ENCODE measurements at regions of chr5 and their contacts with region 1.

Region 1: DNA sequence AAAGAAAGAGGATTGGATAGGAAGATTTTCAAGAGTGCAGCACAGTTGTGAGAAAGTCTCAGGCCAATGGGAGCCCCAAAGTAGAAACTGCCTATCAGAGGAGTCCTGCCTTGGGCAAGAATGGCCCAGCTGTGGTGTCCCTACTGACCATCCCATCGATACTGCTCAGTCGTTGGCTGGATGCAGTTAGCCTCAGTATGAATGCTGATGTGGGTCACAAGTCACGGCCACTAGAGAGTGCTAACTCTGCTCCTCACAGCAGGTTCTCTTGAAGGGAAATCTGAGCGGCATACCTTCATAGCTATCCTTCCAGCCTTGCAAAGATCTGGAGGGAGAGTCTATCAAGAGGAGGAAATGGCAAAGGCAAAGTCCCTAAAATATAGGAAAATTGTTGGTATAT is 11.6 kb upstream of the CETN3 start:
- DNase-seq: no peak
- H3K4me3 ChIP-seq: no peak overlapping the region
- H3K27ac ChIP-seq: no peak overlapping the region
- H3K4me1 ChIP-seq: no peaks in the 10 kb centered on the region; a peak in 1 of 7 replicates
- H3K27me3 ChIP-seq: no peaks in the 10 kb centered on the region
- CTCF ChIP-seq: peak; percentile 40 to 67 (median 41)
- EP300 ChIP-seq: no peak
- POLR2A ChIP-seq: no peak
- RAD21 ChIP-seq: peak; percentile 37 to 54

Region 2: GRCh38 chr5:90353254-90353653 is 67.9 kb before region 1 on chr5:
- CTCF ChIA-PET with region 1: no interaction called
- POLR2A ChIA-PET with region 1: no interaction called
- DNase-seq: no peak
- H3K4me3 ChIP-seq: no peak overlapping the region
- H3K27ac ChIP-seq: no peak overlapping the region
- H3K4me1 ChIP-seq: no peaks in the 10 kb centered on the region
- H3K27me3 ChIP-seq: no peaks in the 10 kb centered on the region
- CTCF ChIP-seq: no peak
- EP300 ChIP-seq: no peak
- POLR2A ChIP-seq: no peak
- RAD21 ChIP-seq: no peak

Region 3: DNA sequence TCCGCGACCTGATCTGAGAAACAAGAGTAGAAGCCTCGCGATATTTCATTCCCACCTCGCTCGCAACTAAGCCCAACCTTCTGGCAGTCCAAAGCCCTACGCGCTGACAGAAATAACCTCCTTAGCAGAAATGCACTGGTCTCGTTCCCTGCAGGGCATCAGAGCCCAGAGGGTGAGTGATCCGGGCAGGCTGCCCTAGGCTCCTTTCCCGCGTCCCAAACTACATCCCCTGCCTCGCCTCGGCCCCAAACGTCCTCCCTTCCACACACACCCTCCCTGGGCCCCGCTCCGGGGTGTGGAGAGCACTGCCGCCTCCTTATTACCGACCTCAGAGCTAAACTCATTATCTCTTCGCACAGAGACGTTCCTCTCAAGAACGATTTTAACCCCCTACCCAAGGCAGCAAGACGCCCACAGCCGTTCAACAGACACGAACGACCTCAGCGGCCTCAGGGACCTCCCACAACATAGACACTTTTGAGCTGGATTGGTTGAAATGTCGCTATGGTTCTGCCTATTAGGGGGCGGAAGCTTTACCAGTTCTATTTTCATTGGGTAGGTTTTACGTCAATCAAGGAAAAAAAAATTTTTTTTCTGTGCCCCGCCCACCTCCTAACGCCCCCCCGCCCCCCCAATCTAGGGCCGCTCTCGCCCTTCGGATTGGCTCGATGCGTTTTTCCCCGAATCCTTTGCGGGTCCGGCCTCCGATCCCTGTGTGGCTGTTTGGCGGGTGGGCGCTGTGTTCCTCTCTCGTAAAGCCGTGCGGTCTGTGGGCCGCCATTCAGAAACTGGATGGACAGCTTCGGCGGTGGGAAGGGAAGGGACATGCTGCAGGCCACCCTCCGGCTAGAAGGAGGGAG is 11.6 kb before region 1 on chr5 and contains the start of gene CETN3:
- CTCF ChIA-PET with region 1: interaction called, 6 read pairs
- POLR2A ChIA-PET with region 1: interaction called, 17 read pairs
- DNase-seq: peak; percentile 78 to 88
- H3K4me3 ChIP-seq: peak within 1 kb of the TSS; percentile 81 to 96 (median 93)
- H3K27ac ChIP-seq: peak within 1 kb of the TSS; percentile 91
- H3K4me1 ChIP-seq: peaks cover 0 to 4% (median 0%) of the 10 kb centered on the region in 4 experiments; a peak in 2 of 7 replicates
- H3K27me3 ChIP-seq: no peaks in the 10 kb centered on the region
- CTCF ChIP-seq: no peak
- EP300 ChIP-seq: no peak
- POLR2A ChIP-seq: peak; percentile 94 to 95
- RAD21 ChIP-seq: no peak
- total RNA-seq, gene CETN3: 38.4 and 43.8 TPM in 2 replicates

Region 4: GRCh38 chr5:90529194-90529938 is 108.2 kb after region 1 on chr5 and contains the start of gene LYSMD3:
- CTCF ChIA-PET with region 1: interaction called, 10 read pairs
- POLR2A ChIA-PET with region 1: no interaction called
- DNase-seq: peak; percentile 92 to 95
- H3K4me3 ChIP-seq: peak within 1 kb of the TSS; percentile 56 to 96 (median 90)
- H3K27ac ChIP-seq: peak within 1 kb of the TSS; percentile 72
- H3K4me1 ChIP-seq: peaks cover 0 to 8% (median 0%) of the 10 kb centered on the region in 4 experiments; a peak in 3 of 7 replicates
- H3K27me3 ChIP-seq: no peaks in the 10 kb centered on the region
- CTCF ChIP-seq: no peak
- EP300 ChIP-seq: peak in 1 of 2 experiments; percentile 47; a peak in 1 of 3 replicates
- POLR2A ChIP-seq: peak in 1 of 2 experiments; percentile 74; a peak in 2 of 3 replicates
- RAD21 ChIP-seq: no peak
- total RNA-seq, gene LYSMD3: 14.9 TPM in 2 replicates

Region 5: DNA sequence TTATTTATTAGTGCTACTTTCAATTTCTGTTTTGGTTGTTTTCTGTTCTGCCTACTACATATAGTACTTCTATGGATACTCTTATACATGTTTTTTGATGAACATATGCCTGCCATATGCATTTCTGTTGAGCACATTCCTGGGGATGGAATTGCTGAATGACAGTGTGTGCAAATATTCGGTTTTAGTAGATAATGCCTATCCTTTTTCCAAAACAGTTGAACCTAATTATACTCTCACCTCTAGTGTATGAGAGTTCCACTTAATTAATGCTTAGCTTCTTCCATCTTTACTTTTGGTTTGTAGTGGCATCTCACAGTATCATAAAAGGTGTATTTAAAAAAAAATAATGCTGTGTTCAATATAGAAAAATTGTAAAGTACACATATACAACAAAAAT is 234.3 kb after region 1 on chr5:
- CTCF ChIA-PET with region 1: no interaction called
- POLR2A ChIA-PET with region 1: no interaction called
- DNase-seq: no peak
- H3K4me3 ChIP-seq: no peak overlapping the region
- H3K27ac ChIP-seq: no peak overlapping the region
- H3K4me1 ChIP-seq: no peaks in the 10 kb centered on the region
- H3K27me3 ChIP-seq: no peaks in the 10 kb centered on the region
- CTCF ChIP-seq: no peak
- EP300 ChIP-seq: no peak
- POLR2A ChIP-seq: no peak
- RAD21 ChIP-seq: no peak